Activated T-helper 1 cell treated with anti-CD3 and anti-CD28 coated beads, Interleukin-12 subunit alpha, Interleukin-12 subunit beta, Interleukin-2, Interleukin-4 antibody, amounts not matched to agents 30 ng/mL and 10 ng/mL and 1 ng/mL, durations not matched to agents 14 hours and 24 hours and 36 hours (primary cell): ENCODE measurements at regions of chr10 and their contacts with region 1.

Region 1: DNA sequence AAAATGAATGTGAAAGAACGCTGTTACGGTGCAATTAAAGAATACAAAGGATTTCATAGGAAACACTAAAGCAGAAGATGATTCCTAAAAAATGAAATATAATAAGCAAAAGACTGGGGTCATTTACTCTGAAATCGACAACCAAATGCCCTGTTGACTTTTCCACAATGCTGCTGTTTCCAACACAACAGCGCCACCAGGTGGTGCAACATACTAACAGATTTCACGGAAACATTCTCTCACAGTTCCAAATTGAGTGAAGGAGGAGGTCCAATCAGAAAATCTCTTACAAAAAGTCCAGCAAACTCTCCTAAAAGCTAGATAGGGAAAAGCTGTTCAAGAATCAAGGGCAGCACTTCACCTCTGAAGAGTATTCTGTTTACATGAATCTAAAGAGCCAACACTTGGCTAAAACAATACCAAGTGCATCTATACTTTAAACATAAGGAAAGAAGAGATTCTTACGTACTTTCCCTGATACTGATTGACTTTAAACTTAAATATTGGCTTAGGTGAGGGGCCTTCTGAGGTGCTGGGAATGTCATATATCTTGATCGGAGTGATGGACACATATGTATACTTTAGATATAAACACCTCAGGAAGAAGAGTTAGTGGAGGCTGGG is 55.9 kb downstream of the UPF2 start:
- DNase-seq: peak; percentile 59
- H3K4me3 Mint-ChIP-seq: no peak overlapping the region
- H3K27ac Mint-ChIP-seq: no peak overlapping the region
- H3K4me1 Mint-ChIP-seq: peaks cover 8% of the 10 kb centered on the region
- H3K27me3 Mint-ChIP-seq: no peaks in the 10 kb centered on the region

Region 2: DNA sequence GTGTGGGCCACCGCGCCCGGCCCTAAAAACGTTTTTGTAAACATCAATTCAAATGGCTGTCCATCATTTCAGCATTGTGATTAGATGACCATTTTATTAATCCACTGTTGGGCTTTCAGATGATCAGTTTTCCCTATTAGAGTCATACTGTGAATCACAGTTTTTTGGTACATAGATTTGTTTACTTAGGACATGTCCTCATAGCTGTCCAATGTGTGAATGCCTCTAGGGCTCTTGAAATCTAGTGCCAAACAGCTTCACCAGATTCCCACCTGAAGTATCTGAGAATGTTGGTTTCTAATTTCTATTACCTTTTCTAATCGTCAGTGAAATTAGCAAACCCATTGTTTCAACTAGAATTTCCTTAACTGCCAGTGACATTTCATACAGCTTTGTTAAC is 10.9 kb before region 1 on chr10:
- intact Hi-C with region 1: no loop called
- DNase-seq: no peak
- H3K4me3 Mint-ChIP-seq: no peak overlapping the region
- H3K27ac Mint-ChIP-seq: no peak overlapping the region
- H3K4me1 Mint-ChIP-seq: no peaks in the 10 kb centered on the region
- H3K27me3 Mint-ChIP-seq: no peaks in the 10 kb centered on the region

Region 3: GRCh38 chr10:12018438-12019282 is 32.0 kb after region 1 on chr10:
- intact Hi-C with region 1: loop called (anchors 2 kb)
- DNase-seq: no peak
- H3K4me3 Mint-ChIP-seq: no peak overlapping the region
- H3K27ac Mint-ChIP-seq: no peak overlapping the region
- H3K4me1 Mint-ChIP-seq: peaks cover 8% of the 10 kb centered on the region
- H3K27me3 Mint-ChIP-seq: no peaks in the 10 kb centered on the region

Region 4: GRCh38 chr10:12177642-12178041 is 190.9 kb after region 1 on chr10:
- intact Hi-C with region 1: no loop called
- DNase-seq: no peak
- H3K4me3 Mint-ChIP-seq: no peak overlapping the region
- H3K27ac Mint-ChIP-seq: no peak overlapping the region
- H3K4me1 Mint-ChIP-seq: peaks cover 35% of the 10 kb centered on the region
- H3K27me3 Mint-ChIP-seq: no peaks in the 10 kb centered on the region